ENCODE measurements at regions of chr12 and their contacts with region 1.

Region 1: DNA sequence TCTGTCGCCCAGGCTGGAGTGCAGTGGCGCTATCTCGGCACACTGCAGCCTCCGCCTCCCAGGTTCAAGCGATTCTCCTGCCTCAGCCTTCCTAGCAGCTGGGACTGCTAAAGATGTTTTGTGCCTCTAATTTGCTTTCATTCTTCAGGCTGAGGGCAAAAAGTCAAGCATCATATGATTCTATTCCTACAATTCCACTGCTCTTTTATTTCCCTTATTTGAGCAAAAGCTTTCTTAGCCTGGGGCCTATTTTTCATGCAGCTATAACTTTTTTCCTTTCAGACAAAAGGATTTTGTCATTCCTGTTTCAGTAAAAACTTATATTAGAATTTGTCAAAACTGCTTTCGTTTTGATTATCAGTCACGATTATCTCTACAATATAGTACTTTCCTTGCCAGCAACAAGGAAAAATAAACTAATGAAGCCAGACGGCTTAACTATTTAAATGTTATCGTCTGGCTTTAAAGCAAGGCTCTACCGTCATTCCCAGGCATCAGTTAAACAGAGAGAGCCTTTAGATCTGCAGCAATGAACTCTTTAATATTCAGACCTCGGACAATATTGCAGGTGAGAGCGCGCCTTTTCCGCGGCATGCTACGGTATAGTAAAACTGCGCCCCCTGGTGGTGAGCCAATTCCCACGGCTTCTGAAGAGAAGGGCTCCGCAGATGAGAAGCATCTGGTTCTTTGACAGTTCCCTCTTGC is 1.4 kb upstream of the SLC2A13 start:
- DNase-seq: peak; percentile 91
- H3K4me3 Mint-ChIP-seq: peak overlapping the region; percentile 65
- H3K27ac Mint-ChIP-seq: peak overlapping the region; percentile 13
- H3K4me1 Mint-ChIP-seq: peaks cover 53% of the 10 kb centered on the region
- H3K27me3 Mint-ChIP-seq: peaks cover 10% of the 10 kb centered on the region

Region 2: GRCh38 chr12:39319187-39319586 is 788.1 kb before region 1 on chr12:
- CTCF ChIA-PET with region 1: no interaction called
- POLR2A ChIA-PET with region 1: no interaction called
- intact Hi-C with region 1: loop called (anchors 5 kb)
- DNase-seq: no peak
- H3K4me3 Mint-ChIP-seq: no peak overlapping the region
- H3K27ac Mint-ChIP-seq: no peak overlapping the region
- H3K4me1 Mint-ChIP-seq: no peaks in the 10 kb centered on the region
- H3K27me3 Mint-ChIP-seq: no peaks in the 10 kb centered on the region

Region 3: DNA sequence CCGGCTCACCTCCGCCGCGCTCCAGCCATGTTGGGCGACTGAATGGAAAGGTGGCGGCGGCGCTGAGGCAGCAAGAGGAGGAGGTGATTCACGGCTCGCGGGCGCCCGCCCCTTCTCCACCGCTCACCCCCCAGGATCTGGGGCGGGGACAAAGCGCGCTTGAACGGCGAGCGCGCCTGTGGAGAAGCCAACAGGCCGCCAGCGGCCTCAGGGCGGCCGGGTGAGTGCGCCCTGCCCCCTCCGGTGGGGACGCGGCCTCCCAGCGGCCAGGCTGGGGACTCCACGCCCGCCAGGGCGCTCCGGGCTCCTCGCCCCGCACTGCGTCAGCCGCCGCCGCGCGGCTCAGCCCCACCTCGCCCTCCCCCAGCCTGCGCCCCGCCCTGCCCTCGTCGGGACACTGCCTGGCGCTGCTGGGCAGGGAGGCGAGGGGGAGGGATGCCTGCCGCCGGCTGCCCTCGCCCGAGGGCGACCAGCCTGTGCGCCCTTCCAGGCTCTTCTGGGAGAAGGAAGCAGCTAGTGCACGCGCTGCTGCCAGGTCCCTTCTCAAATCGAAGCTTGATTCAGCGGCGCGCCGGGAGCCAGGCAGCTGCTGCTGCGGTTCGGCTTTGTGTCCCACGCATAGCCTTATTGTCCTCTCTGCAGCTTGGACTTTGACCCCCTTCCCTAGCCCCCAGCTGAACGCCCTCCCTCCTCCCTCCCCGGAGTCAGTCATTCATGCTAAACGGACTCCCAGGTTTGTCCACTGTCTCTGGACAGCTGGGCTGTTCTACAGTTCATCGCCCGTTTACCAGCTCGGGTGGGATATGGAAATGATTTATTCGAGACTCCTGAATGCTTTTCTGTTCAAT is 663.9 kb before region 1 on chr12 and contains the start of gene KIF21A:
- CTCF ChIA-PET with region 1: no interaction called
- POLR2A ChIA-PET with region 1: no interaction called
- intact Hi-C with region 1: loop called (anchors 1 kb)
- DNase-seq: peak; percentile 93
- H3K4me3 Mint-ChIP-seq: peak within 1 kb of the TSS; percentile 98
- H3K27ac Mint-ChIP-seq: peak within 1 kb of the TSS; percentile 88
- H3K4me1 Mint-ChIP-seq: peaks cover 24% of the 10 kb centered on the region
- H3K27me3 Mint-ChIP-seq: no peaks in the 10 kb centered on the region
- total RNA-seq, gene KIF21A: 28.5 to 30.5 TPM

Region 4: DNA sequence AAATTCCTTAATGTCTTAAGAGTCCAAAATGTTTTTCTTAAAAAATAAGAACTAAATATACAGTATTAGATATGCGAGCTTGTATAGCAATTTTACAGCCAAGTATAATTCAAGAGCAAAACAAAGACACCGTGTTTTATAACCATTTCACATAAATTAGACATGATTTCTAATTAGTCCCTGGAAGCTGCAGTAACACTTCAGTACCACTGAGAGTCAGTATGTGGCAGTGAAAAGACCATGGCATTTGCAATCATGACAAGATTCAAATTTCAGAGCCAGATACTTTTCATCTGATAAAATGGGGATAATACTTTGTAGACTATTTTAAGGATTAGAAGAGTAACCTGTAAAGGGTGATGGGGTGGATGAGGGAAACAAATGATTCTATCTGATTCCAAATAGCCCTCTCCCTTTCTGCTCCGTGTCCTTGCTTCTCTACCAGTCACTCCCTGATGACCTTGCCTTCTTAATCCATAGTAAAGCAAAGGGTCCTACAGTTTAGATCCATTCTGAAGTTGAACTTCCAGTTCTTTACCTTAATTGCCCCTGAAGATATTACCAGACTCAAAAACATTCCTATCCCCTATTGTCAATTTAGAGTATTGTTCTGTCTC is 342.2 kb before region 1 on chr12:
- CTCF ChIA-PET with region 1: no interaction called
- POLR2A ChIA-PET with region 1: no interaction called
- intact Hi-C with region 1: loop called (anchors 1 kb)
- DNase-seq: no peak
- H3K4me3 Mint-ChIP-seq: no peak overlapping the region
- H3K27ac Mint-ChIP-seq: no peak overlapping the region
- H3K4me1 Mint-ChIP-seq: no peaks in the 10 kb centered on the region
- H3K27me3 Mint-ChIP-seq: no peaks in the 10 kb centered on the region

Region 5: DNA sequence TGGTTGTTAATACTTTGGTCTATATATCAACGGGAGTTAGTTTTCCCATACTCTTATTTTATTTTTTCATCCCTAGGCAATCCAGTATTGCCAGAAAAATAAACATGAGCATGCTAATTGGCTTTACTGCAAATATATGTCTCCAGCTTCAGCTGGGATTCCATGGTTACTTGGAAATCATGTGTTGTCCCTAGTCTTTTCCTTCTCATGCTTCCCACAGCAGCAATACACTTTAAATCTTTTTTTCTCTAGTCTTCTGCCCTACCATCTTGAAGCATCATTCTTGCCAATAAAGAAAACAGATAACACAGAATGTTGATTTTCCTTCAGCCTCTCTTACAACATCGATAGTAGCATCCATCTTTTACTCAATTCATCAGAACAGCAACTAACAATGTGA is 61.6 kb before region 1 on chr12:
- CTCF ChIA-PET with region 1: no interaction called
- POLR2A ChIA-PET with region 1: no interaction called
- intact Hi-C with region 1: no loop called
- DNase-seq: no peak
- H3K4me3 Mint-ChIP-seq: no peak overlapping the region
- H3K27ac Mint-ChIP-seq: no peak overlapping the region
- H3K4me1 Mint-ChIP-seq: peaks cover 2% of the 10 kb centered on the region
- H3K27me3 Mint-ChIP-seq: no peaks in the 10 kb centered on the region

Region 6: GRCh38 chr12:40056373-40056772 is 50.9 kb before region 1 on chr12:
- CTCF ChIA-PET with region 1: no interaction called
- POLR2A ChIA-PET with region 1: no interaction called
- intact Hi-C with region 1: no loop called
- DNase-seq: no peak
- H3K4me3 Mint-ChIP-seq: no peak overlapping the region
- H3K27ac Mint-ChIP-seq: no peak overlapping the region
- H3K4me1 Mint-ChIP-seq: no peaks in the 10 kb centered on the region
- H3K27me3 Mint-ChIP-seq: no peaks in the 10 kb centered on the region

Region 7: GRCh38 chr12:40117818-40118217 is 10.6 kb after region 1 on chr12:
- CTCF ChIA-PET with region 1: interaction called, 40 read pairs
- POLR2A ChIA-PET with region 1: interaction called, 15 read pairs
- intact Hi-C with region 1: loop called (anchors 1 kb)
- DNase-seq: no peak
- H3K4me3 Mint-ChIP-seq: no peak overlapping the region
- H3K27ac Mint-ChIP-seq: peak overlapping the region; percentile 6
- H3K4me1 Mint-ChIP-seq: peaks cover 9% of the 10 kb centered on the region
- H3K27me3 Mint-ChIP-seq: peaks cover 12% of the 10 kb centered on the region

Region 8: DNA sequence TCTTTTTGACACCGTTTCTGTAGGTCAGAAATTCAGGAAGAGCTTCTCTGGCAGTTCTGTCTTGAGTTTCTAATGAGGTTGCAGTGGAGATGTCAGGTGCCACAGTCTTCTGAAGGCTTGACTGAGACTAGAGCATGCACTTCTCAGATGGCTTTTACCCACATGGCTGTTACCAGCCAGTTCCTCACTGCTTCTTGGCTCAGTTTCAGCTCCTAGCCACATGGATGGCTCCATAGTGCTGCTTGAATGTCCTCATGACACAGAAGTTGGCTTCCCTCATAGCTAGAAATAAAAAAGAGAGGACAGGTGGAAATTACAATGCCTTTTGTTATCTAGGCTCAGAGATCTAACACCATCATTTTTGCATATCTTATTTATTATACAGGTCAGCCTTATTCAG is 36.8 kb after region 1 on chr12:
- CTCF ChIA-PET with region 1: interaction called, 4 read pairs
- POLR2A ChIA-PET with region 1: no interaction called
- intact Hi-C with region 1: loop called (anchors 2 kb)
- DNase-seq: no peak
- H3K4me3 Mint-ChIP-seq: no peak overlapping the region
- H3K27ac Mint-ChIP-seq: no peak overlapping the region
- H3K4me1 Mint-ChIP-seq: no peaks in the 10 kb centered on the region
- H3K27me3 Mint-ChIP-seq: peaks cover 6% of the 10 kb centered on the region

Region 9: DNA sequence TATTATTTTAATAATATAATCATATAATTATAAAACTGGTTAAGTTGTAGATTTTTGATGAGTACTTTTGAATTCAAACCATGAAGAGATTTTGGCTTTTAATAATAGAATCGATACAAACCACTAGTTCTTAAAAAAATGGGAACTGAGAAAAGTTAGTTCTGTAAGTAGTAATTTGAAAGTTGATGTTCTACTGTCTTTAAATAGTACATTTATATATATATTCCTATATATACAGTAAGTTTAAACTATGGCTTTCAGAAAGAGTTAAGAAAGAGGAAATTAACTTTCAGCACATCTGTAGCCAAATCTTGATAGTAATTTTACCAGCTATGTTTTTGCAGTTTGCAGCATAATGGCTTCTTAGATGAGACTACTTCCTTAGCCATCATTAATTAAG is 125.4 kb after region 1 on chr12:
- CTCF ChIA-PET with region 1: no interaction called
- POLR2A ChIA-PET with region 1: no interaction called
- intact Hi-C with region 1: no loop called
- DNase-seq: no peak
- H3K4me3 Mint-ChIP-seq: no peak overlapping the region
- H3K27ac Mint-ChIP-seq: no peak overlapping the region
- H3K4me1 Mint-ChIP-seq: no peaks in the 10 kb centered on the region
- H3K27me3 Mint-ChIP-seq: peaks cover 4% of the 10 kb centered on the region

Measured in activated CD4-positive, alpha-beta memory T cell treated with anti-CD3 and anti-CD28 coated beads for 36 hours (primary cell).